PC-3 (cell line): ENCODE measurements at regions of chr18 and their contacts with region 1.

Region 1: DNA sequence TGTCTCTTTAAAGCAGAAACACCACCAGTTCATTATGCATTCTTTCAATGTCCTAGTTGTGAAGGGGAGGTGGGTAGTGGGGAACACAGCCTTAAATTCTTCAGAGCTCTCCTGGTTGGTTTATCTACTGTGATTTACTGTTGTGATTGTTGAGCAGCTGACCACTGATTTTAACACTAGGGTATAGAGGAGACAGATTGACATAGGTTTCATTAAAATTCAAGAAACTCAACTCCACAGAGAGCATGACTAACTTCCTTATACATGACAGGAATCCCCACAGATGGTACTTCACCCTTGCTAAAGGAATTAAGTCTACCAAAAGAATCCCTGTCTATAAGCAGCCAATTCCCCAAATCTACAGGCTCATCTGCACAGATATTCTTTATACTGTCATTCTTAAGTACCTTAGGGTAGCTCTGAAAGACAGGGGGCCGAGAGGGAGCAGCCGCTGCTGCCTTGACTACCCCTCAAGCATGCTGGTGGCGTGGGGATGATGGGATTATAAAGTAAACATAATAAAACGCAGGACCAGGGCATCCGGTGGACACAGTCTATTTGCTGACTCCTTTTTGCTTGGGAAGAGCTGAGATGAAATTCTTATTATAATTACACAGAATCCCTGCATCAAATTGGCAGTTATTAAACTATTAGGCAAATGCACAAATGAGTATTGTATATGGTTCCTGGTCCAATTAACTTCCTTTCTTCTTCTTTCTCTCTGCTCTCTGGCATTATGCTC is 1377.6 kb upstream of the PIK3C3 start:
- DNase-seq: no peak
- ATAC-seq: no peak
- H3K4me3 ChIP-seq: no peak overlapping the region
- H3K27ac ChIP-seq: no peak overlapping the region
- H3K4me1 ChIP-seq: no peaks in the 10 kb centered on the region
- H3K27me3 ChIP-seq: no peaks in the 10 kb centered on the region
- CTCF ChIP-seq: no peak

Region 2: GRCh38 chr18:40631319-40631718 is 53.9 kb after region 1 on chr18:
- CTCF ChIA-PET with region 1: no interaction called
- POLR2A ChIA-PET with region 1: no interaction called
- intact Hi-C with region 1: loop called (anchors 10 kb)
- DNase-seq: no peak
- ATAC-seq: no peak
- H3K4me3 ChIP-seq: no peak overlapping the region
- H3K27ac ChIP-seq: no peak overlapping the region
- H3K4me1 ChIP-seq: no peaks in the 10 kb centered on the region
- H3K27me3 ChIP-seq: no peaks in the 10 kb centered on the region
- CTCF ChIP-seq: no peak